ENCODE measurements at regions of chr17 and their contacts with region 1.

Region 1: GRCh38 chr17:45428050-45428617 is 4.5 kb downstream of the ARHGAP27 start:
- DNase-seq: peak; percentile 83 to 94
- ATAC-seq: peak; percentile 17 to 66
- H3K4me3 ChIP-seq: no peak overlapping the region
- H3K27ac ChIP-seq: peak overlapping the region in 1 of 2 experiments; percentile 56; a peak in 2 of 6 replicates
- H3K4me1 ChIP-seq: peaks cover 38% of the 10 kb centered on the region
- CTCF ChIP-seq: peak; percentile 97
- EP300 ChIP-seq: no peak
- POLR2A ChIP-seq: no peak
- RAD21 ChIP-seq: peak; percentile 90 to 93

Region 2: GRCh38 chr17:45235416-45236281 is 192.5 kb before region 1 on chr17:
- CTCF ChIA-PET with region 1: interaction called, 15 read pairs
- POLR2A ChIA-PET with region 1: no interaction called
- DNase-seq: peak; percentile 87 to 93
- ATAC-seq: peak; percentile 60 to 75
- H3K4me3 ChIP-seq: no peak overlapping the region
- H3K27ac ChIP-seq: peak overlapping the region; percentile 35 to 66; a peak in 5 of 6 replicates
- H3K4me1 ChIP-seq: peaks cover 33% of the 10 kb centered on the region
- CTCF ChIP-seq: peak; percentile 95
- EP300 ChIP-seq: no peak
- POLR2A ChIP-seq: no peak
- RAD21 ChIP-seq: peak; percentile 79 to 82

Region 3: DNA sequence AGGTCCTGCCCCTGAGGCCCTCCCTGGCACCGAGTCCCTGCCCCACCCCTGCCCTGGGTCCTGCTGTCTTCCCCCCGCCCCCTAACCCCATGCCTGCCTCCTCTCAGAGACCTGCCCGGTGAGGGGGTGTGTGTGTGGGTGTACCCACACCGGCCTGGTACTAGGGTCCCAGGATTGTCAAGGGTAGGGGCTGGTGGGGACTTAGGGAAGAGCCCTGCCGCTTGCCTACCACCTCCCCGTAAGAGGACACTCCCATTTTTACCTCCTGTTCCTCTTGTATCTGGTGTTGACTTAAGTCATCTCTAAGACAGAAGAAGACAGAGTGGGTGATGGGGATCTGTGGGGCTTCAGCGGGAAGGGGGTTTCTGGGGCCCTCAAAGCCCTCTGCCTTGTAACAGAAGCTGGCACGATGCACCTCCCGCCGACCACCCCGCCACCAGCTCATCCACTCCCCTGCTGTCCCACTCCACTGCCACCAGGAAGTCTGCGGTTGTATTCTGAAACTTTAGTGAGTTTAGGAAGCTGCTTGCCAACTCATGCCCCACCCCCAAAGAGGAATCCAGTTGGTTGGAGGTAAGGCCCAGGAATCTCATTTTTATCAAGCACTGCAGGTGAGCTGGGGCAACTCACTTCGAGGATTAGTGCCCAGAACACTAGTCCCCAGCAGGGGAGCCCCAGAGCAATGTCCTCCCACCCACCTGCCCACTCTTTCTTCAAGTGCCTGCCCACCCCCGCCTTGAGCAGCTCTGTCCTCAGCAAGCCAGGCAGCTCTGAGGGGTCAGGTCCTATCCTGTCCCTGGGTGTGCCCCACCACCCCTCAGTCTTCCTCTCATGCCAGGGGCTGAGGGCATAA is 171.8 kb before region 1 on chr17:
- CTCF ChIA-PET with region 1: interaction called, 11 read pairs
- POLR2A ChIA-PET with region 1: no interaction called
- DNase-seq: no peak
- ATAC-seq: peak; percentile 21 to 25; a peak in 4 of 6 replicates
- H3K4me3 ChIP-seq: no peak overlapping the region
- H3K27ac ChIP-seq: peak overlapping the region in 1 of 2 experiments; percentile 42; a peak in 2 of 6 replicates
- H3K4me1 ChIP-seq: peaks cover 22% of the 10 kb centered on the region
- CTCF ChIP-seq: no peak
- EP300 ChIP-seq: no peak
- POLR2A ChIP-seq: no peak
- RAD21 ChIP-seq: no peak

Region 4: GRCh38 chr17:45385331-45385997 is 42.7 kb before region 1 on chr17:
- CTCF ChIA-PET with region 1: interaction called, 331 read pairs
- POLR2A ChIA-PET with region 1: interaction called, 3 read pairs
- DNase-seq: peak; percentile 91 to 94
- ATAC-seq: peak; percentile 93 to 97
- H3K4me3 ChIP-seq: no peak overlapping the region
- H3K27ac ChIP-seq: peak overlapping the region; percentile 79 to 97
- H3K4me1 ChIP-seq: peaks cover 50% of the 10 kb centered on the region
- CTCF ChIP-seq: peak; percentile 99
- EP300 ChIP-seq: no peak
- POLR2A ChIP-seq: no peak
- RAD21 ChIP-seq: peak; percentile 100

Region 5: GRCh38 chr17:45410144-45411091 is 17.7 kb before region 1 on chr17:
- CTCF ChIA-PET with region 1: interaction called, 331 read pairs
- POLR2A ChIA-PET with region 1: interaction called, 3 read pairs
- DNase-seq: no peak
- ATAC-seq: no peak
- H3K4me3 ChIP-seq: no peak overlapping the region
- H3K27ac ChIP-seq: no peak overlapping the region
- H3K4me1 ChIP-seq: peaks cover 45% of the 10 kb centered on the region
- CTCF ChIP-seq: no peak
- EP300 ChIP-seq: no peak
- POLR2A ChIP-seq: no peak
- RAD21 ChIP-seq: no peak

Region 6: DNA sequence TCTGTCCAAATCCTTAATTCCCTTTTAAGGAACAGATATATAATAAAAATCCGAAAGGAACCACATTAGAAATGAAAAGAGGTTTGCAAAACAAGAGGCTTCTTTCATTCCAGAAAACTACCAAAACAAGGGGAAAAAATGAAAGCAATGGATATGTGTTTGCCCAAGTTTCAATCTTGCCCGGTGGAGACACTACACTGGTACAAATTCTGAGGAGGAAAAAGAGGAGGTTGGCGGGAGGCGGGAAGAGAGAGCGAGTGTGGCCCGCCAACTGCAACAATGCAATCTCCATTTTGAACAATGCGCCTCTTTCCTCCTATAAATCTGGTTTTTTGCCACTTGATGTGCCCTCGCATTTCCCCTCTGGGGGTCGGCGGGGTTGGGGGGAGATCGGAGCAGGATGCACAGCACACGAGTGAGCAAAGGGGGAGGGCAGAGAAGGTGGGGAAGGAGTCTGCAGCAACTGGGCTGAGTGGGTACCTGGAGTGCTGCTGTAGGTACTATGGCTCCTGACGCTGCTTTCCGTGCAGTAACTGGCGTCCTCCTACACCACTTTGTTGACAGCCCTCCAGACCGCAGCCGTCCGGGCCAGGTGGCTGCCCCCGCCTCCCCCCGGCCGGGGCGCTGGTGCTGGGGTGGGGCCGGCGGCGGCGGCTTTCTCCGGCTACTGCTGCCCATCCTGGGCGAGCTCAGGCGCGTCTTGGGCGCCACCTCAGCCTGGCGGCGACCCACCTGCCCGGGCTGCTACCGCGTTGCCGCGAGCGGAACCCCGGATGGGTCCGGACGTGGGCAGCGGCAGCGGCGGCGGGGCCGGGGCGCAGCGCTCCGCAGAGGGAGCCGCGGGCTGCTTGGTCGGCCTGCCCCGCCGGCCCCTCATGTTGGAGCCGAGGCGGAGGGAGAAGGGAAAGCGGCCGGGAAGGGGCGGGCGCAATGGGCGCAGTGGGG is 156.2 kb after region 1 on chr17:
- CTCF ChIA-PET with region 1: interaction called, 27 read pairs
- POLR2A ChIA-PET with region 1: interaction called, 4 read pairs
- DNase-seq: peak; percentile 80 to 84
- ATAC-seq: peak; percentile 60 to 69
- H3K4me3 ChIP-seq: peak overlapping the region; percentile 55
- H3K27ac ChIP-seq: peak overlapping the region; percentile 79 to 84
- H3K4me1 ChIP-seq: peaks cover 6% of the 10 kb centered on the region
- CTCF ChIP-seq: no peak
- EP300 ChIP-seq: no peak
- POLR2A ChIP-seq: peak; percentile 47
- RAD21 ChIP-seq: no peak; a peak in 2 of 5 replicates